Activated CD4-positive, alpha-beta memory T cell treated with anti-CD3 and anti-CD28 coated beads for 36 hours (primary cell): ENCODE measurements at regions of chr12 and their contacts with region 1.

Region 1: DNA sequence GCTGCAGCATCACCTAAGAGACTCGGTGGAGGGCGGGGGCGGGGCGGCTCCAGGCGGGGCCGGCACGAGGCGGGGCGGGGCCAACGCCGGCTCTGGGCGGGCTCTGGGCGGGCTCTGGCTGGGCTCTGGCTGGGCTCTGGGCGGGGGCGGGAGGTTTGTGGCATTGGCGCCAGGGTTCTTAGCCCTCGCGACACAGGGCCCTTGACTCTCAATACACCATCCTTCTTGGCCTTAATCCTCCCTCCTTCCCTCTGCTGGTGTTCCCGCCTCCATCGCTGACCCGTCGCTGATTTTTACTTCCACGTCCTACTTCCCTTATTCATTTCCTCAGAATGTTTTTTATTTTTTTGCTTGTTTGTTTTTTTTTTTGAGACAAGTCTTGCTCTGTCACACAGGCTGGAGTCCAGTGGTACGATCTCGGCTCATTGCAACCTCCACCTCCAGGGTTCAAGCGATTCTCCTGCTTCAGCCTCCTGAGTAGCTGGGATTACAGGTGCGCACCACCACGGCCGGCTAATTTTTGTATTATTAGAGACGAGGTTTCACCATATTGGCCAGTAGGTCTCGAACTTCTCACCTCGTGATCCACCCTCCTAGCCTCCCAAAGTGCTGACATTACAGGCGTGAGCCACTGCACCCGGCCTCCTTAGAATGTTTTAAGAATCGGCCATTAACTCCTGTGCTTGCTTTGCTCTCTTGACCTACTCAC is at the start of gene BLTP3B:
- DNase-seq: peak; percentile 96
- H3K4me3 Mint-ChIP-seq: peak within 1 kb of the TSS; percentile 99
- H3K27ac Mint-ChIP-seq: peak within 1 kb of the TSS; percentile 100
- H3K4me1 Mint-ChIP-seq: peaks cover 33% of the 10 kb centered on the region
- H3K27me3 Mint-ChIP-seq: no peaks in the 10 kb centered on the region
- total RNA-seq, gene BLTP3B: 53.1 to 53.9 TPM

Region 2: GRCh38 chr12:98593351-98594049 is 1549.5 kb before region 1 on chr12 and contains the start of gene SLC25A3:
- CTCF ChIA-PET with region 1: no interaction called
- POLR2A ChIA-PET with region 1: no interaction called
- intact Hi-C with region 1: loop called (anchors 2 kb)
- DNase-seq: peak; percentile 96
- H3K4me3 Mint-ChIP-seq: peak within 1 kb of the TSS; percentile 91
- H3K27ac Mint-ChIP-seq: peak within 1 kb of the TSS; percentile 97
- H3K4me1 Mint-ChIP-seq: peaks cover 29% of the 10 kb centered on the region
- H3K27me3 Mint-ChIP-seq: no peaks in the 10 kb centered on the region
- total RNA-seq, gene SLC25A3: 584 to 620 TPM

Region 3: DNA sequence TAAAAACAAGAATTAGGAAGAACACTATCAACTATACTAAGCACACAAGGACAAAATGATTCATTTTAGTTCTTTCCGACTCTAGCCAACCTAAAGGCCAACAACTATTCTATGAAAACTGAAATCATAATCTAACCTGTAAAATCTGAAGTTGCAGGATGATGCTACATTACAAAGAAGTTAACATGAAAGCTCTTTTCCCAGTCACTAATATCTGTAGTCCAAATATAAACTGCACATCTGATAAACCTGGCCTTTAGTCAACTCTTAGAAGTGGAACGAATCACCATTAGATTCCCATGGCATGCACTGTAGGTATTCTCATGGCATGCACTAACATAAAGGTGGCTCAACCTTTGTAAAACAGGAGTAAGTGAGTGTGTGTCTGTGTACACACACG is 42.0 kb before region 1 on chr12:
- CTCF ChIA-PET with region 1: no interaction called
- POLR2A ChIA-PET with region 1: no interaction called
- intact Hi-C with region 1: loop called (anchors 2 kb)
- DNase-seq: no peak
- H3K4me3 Mint-ChIP-seq: no peak overlapping the region
- H3K27ac Mint-ChIP-seq: peak overlapping the region; percentile 58
- H3K4me1 Mint-ChIP-seq: peaks cover 11% of the 10 kb centered on the region
- H3K27me3 Mint-ChIP-seq: no peaks in the 10 kb centered on the region

Region 4: DNA sequence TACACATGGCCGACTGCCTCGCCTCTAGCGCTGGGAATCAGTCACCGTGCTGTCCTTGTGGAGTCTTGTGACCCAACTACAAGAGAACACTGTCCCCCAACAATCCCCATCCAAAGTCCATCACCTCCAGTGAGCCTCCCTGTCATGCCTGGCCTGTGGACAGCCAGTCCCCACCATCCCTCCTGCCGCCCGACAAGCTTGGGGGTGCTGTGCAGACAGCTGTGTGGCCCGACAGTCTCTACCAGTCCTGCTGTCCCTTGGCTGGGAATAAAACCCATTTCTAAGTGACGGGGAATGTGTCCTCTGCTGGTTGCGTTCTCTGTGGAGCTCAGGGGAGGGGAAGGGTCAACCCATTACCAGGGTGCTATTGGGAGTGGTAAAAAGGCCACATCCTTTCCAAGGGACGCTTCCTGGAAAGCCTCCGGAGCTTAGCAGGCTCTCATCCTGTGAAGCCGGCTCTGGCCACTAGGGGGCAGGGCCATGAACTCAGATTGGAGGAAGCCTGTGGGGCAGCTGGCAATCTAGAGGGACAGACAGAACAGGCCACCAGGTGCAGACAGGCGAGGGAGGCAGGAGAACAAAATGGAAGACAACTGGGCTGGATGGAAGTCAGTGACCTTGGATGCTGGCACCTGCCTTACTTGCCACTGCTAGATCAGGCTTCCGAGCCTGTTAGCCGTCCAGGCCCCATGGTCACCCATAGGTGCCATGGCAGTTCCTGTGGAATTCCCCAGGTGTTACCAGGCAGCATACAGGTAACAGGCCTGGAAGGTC is 11.7 kb after region 1 on chr12:
- CTCF ChIA-PET with region 1: interaction called, 38 read pairs
- POLR2A ChIA-PET with region 1: no interaction called
- intact Hi-C with region 1: loop called (anchors 1 kb)
- DNase-seq: peak; percentile 83
- H3K4me3 Mint-ChIP-seq: no peak overlapping the region
- H3K27ac Mint-ChIP-seq: no peak overlapping the region
- H3K4me1 Mint-ChIP-seq: peaks cover 4% of the 10 kb centered on the region
- H3K27me3 Mint-ChIP-seq: no peaks in the 10 kb centered on the region

Region 5: DNA sequence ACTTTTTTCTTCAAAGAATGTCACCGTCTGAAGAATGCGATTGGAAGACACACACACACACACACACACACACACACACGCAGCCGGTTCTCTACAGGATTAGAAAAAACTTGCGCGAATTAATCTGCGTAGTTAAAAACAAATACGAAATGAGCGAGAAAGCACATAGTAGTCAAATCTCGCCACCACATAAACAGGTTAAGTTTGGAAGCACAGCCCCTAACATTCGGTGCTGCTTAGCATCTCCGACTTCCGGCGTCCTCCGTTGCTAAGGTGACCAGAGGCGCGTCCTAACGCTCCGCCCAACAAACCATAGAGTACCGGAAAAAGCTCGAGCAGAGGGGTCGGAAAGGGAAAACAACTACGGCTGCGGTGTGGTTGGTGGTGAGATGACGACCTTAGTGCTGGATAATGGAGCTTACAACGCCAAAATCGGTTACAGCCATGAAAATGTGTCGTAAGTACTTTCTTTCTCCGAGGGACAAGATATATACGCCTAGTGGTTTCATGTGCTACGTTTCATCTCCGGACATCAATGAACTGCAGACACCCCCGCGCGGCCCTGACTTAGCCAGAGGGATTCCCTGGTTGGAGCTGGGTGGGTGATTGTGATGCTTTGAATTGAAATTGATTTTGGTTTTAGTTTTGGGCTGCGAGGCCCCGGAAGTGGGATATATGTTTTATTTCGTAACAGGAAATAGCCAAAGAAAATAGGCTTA is 57.6 kb after region 1 on chr12 and contains the start of gene ACTR6:
- CTCF ChIA-PET with region 1: interaction called, 5 read pairs
- POLR2A ChIA-PET with region 1: no interaction called
- intact Hi-C with region 1: loop called (anchors 1 kb)
- DNase-seq: peak; percentile 98
- H3K4me3 Mint-ChIP-seq: peak within 1 kb of the TSS; percentile 96
- H3K27ac Mint-ChIP-seq: peak within 1 kb of the TSS; percentile 99
- H3K4me1 Mint-ChIP-seq: peaks cover 27% of the 10 kb centered on the region
- H3K27me3 Mint-ChIP-seq: no peaks in the 10 kb centered on the region
- total RNA-seq, gene ACTR6: 58.3 to 60.3 TPM

Region 6: GRCh38 chr12:100266835-100267618 is 124.0 kb after region 1 on chr12 and contains the starts of genes DEPDC4 and SCYL2:
- CTCF ChIA-PET with region 1: no interaction called
- POLR2A ChIA-PET with region 1: no interaction called
- intact Hi-C with region 1: loop called (anchors 1 kb)
- DNase-seq: peak; percentile 95
- H3K4me3 Mint-ChIP-seq: peak within 1 kb of the TSS; percentile 94
- H3K27ac Mint-ChIP-seq: peak within 1 kb of the TSS; percentile 96
- H3K4me1 Mint-ChIP-seq: peaks cover 24% of the 10 kb centered on the region
- H3K27me3 Mint-ChIP-seq: no peaks in the 10 kb centered on the region
- total RNA-seq, gene DEPDC4: 2.4 to 3.5 TPM
- total RNA-seq, gene SCYL2: 24.5 to 26.7 TPM

Region 7: GRCh38 chr12:100573292-100574186 is 430.5 kb after region 1 on chr12 and contains the start of gene GAS2L3:
- CTCF ChIA-PET with region 1: no interaction called
- POLR2A ChIA-PET with region 1: no interaction called
- intact Hi-C with region 1: loop called (anchors 10 kb)
- DNase-seq: peak; percentile 77
- H3K4me3 Mint-ChIP-seq: peak within 1 kb of the TSS; percentile 90
- H3K27ac Mint-ChIP-seq: no peak within 1 kb of the TSS
- H3K4me1 Mint-ChIP-seq: peaks cover 12% of the 10 kb centered on the region
- H3K27me3 Mint-ChIP-seq: peaks cover 17% of the 10 kb centered on the region
- total RNA-seq, gene GAS2L3: 3.4 to 3.6 TPM